K562 (cell line): ENCODE measurements at regions of chr3 and their contacts with region 1.

Region 1: DNA sequence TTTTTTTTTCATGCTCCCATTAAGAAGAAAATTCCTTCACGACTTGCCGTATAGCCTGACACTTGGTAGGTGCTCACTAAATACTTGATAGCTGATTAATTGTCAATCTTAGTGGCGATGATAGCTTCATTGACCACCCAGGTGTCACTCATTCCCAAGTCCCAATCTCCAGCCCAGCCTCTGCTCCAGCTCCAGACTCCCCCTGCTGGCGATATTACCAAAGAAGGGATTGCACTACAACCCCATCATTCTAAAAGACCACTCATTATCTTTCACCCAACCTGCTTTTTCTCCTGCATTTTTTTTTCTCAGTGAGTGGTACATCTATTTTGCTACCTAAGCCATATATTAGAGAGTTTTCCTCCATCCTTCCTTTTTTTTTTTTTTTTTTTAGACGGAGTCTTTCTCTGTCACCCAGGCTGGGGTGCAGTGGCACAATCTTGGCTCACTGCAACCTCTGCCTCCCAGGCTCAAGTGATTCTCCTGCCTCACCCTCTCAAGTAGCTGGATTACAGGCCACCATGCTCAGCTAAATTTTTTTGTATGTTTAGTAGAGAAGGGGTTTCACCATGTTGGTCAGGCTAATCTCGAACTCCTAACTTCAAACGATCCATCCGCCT is 19.5 kb upstream of the COMMD2 start:
- DNase-seq: peak; percentile 55 to 63 (median 57)
- ATAC-seq: peak; percentile 92
- H3K4me3 ChIP-seq: no peak overlapping the region
- H3K27ac ChIP-seq: no peak overlapping the region
- H3K4me1 ChIP-seq: no peaks in the 10 kb centered on the region
- H3K27me3 ChIP-seq: peaks cover 4 to 13% of the 10 kb centered on the region in 2 experiments; a peak in 3 of 5 replicates
- CTCF ChIP-seq: peak; percentile 67 to 76 (median 75)
- EP300 ChIP-seq: no peak
- POLR2A ChIP-seq: no peak
- RAD21 ChIP-seq: peak; percentile 52 to 66; a peak in 3 of 4 replicates

Region 2: GRCh38 chr3:149512209-149512782 is 259.5 kb before region 1 on chr3:
- CTCF ChIA-PET with region 1: no interaction called
- POLR2A ChIA-PET with region 1: no interaction called
- in situ Hi-C with region 1: no loop called
- intact Hi-C with region 1: loop called (anchors 1 kb)
- DNase-seq: peak; percentile 53 to 63 (median 58)
- ATAC-seq: peak; percentile 97
- H3K4me3 ChIP-seq: no peak overlapping the region
- H3K27ac ChIP-seq: no peak overlapping the region
- H3K4me1 ChIP-seq: no peaks in the 10 kb centered on the region
- H3K27me3 ChIP-seq: peaks cover 3 to 16% of the 10 kb centered on the region in 2 experiments; a peak in 4 of 5 replicates
- CTCF ChIP-seq: peak; percentile 75 to 76 (median 75)
- EP300 ChIP-seq: no peak
- POLR2A ChIP-seq: no peak
- RAD21 ChIP-seq: peak; percentile 61 to 71

Region 3: GRCh38 chr3:149572796-149573414 is 198.9 kb before region 1 on chr3:
- CTCF ChIA-PET with region 1: interaction called, 4 read pairs
- POLR2A ChIA-PET with region 1: no interaction called
- in situ Hi-C with region 1: no loop called
- intact Hi-C with region 1: loop called (anchors 2 kb)
- DNase-seq: no peak
- ATAC-seq: no peak
- H3K4me3 ChIP-seq: no peak overlapping the region
- H3K27ac ChIP-seq: no peak overlapping the region
- H3K4me1 ChIP-seq: peaks cover 0 to 14% of the 10 kb centered on the region in 2 experiments; a peak in 3 of 5 replicates
- H3K27me3 ChIP-seq: no peaks in the 10 kb centered on the region
- CTCF ChIP-seq: no peak
- EP300 ChIP-seq: no peak
- POLR2A ChIP-seq: no peak
- RAD21 ChIP-seq: no peak